ENCODE measurements at regions of chr18 and their contacts with region 1.

Region 1: DNA sequence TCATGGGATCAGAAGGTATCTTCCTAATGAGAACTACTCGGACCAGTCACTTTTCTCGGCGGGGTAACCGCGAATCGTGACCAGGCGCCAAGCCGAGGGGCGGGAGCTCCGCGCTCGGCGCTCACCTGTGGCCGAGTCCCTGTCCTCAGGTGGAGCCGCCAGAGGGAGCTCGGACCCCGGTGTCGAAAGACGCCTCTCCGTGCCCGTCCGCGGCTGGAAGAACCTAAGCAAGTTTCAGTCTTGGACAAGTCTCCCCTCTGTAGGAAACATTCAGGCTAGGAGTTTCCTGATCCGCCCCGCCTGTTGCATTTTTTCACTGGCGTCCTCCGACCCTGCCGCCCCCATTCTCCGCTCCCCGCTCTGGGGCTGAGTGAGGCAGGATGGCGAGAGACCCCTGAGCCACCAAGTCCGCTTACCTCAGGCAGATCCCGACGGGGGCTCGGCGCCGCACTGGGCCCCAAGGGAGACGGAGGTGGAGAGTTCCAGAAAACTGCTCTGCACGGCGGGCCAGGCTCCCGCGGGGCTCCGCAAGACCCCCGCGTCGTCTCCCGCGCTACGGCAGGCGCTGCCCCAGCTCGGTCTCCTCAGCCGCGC is 478 bp downstream of the DSEL start:
- DNase-seq: peak; percentile 77
- H3K4me3 Mint-ChIP-seq: peak overlapping the region; percentile 88
- H3K27ac Mint-ChIP-seq: no peak overlapping the region
- H3K4me1 Mint-ChIP-seq: peaks cover 18% of the 10 kb centered on the region
- H3K27me3 Mint-ChIP-seq: peaks cover 4% of the 10 kb centered on the region

Region 2: GRCh38 chr18:66971960-66972359 is 544.1 kb before region 1 on chr18:
- CTCF ChIA-PET with region 1: no interaction called
- POLR2A ChIA-PET with region 1: no interaction called
- intact Hi-C with region 1: no loop called
- DNase-seq: no peak
- H3K4me3 Mint-ChIP-seq: no peak overlapping the region
- H3K27ac Mint-ChIP-seq: no peak overlapping the region
- H3K4me1 Mint-ChIP-seq: no peaks in the 10 kb centered on the region
- H3K27me3 Mint-ChIP-seq: no peaks in the 10 kb centered on the region

Region 3: GRCh38 chr18:67217551-67218166 is 298.4 kb before region 1 on chr18:
- CTCF ChIA-PET with region 1: interaction called, 7 read pairs
- POLR2A ChIA-PET with region 1: no interaction called
- intact Hi-C with region 1: loop called (anchors 1 kb)
- DNase-seq: peak; percentile 58
- H3K4me3 Mint-ChIP-seq: no peak overlapping the region
- H3K27ac Mint-ChIP-seq: no peak overlapping the region
- H3K4me1 Mint-ChIP-seq: no peaks in the 10 kb centered on the region
- H3K27me3 Mint-ChIP-seq: no peaks in the 10 kb centered on the region

Region 4: DNA sequence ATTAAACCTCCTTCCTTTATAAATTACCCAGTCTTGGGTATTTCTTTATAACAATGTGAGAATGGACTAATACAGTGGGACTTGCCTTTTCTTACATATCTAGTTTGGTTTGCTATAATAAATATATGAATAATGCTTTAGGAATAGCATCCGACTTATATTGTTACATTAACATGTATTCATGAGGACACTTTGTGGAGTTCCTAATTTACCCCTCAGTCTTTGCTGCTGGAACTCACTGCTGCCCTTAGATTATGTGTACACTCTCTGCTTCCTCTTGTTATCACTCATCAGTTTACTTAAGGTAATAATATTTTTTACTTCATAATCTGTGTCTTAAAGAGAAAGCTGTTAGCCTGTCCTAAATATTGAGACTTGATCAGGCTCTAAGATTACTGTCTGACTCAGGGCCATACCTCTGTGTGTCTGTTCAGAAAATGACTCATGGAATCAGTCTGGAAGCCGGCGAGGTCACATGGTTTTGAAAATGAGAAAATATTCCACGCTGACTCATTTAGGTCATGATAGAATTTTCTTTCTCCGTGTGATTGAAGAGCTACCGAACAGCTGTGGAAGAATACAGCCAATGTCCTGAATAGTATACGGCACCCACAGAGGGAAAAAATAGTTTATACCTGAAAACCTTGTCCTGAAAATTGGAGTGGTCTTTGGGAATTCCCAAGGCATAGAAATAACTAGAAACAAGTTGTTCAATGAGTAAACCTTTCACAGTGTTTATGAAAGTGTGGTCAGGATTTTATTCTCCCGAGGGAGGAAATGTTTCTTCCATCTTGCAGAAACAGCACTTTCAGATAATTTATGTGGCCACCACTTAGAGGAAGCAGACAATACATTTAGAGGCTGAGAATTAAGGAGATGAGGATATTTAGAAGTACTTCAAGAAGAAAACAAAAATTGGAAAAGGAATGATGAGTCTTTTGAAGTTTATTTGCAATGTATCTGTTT is 155.9 kb before region 1 on chr18:
- CTCF ChIA-PET with region 1: no interaction called
- POLR2A ChIA-PET with region 1: no interaction called
- intact Hi-C with region 1: loop called (anchors 2 kb)
- DNase-seq: peak; percentile 63
- H3K4me3 Mint-ChIP-seq: no peak overlapping the region
- H3K27ac Mint-ChIP-seq: no peak overlapping the region
- H3K4me1 Mint-ChIP-seq: peaks cover 16% of the 10 kb centered on the region
- H3K27me3 Mint-ChIP-seq: peaks cover 1% of the 10 kb centered on the region

Region 5: DNA sequence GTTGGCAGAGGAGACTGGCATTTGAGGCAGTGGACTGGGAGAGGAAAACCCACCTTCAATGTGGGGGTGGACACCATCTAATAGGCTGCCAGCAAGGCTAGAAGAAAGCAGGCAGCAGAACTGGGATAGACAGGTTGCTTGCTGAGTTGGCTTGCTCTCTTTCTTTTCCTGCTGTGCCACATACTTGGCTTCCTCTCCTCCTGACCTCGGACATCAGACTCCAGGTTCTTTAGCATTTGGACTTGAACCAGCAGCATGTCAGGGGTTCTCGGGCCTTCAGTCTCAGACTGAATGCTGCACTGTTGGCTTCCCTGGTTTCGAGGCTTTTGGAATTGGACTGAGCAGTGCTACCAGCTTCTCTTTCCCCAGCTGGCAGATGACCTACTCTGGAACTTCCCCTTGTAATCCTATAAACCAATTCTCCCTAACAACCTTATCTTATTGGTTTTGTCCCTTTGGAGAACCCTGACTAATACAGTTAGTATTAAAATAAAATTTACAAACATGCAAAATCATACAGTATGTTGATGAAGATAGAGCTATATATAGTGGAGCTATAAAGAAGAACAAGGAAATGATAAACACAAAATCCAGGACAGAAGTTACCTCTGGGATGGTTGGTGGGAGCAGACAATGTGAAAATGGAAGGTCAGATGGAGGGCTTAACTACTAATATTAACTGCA is 15.4 kb before region 1 on chr18:
- CTCF ChIA-PET with region 1: no interaction called
- POLR2A ChIA-PET with region 1: no interaction called
- intact Hi-C with region 1: no loop called
- DNase-seq: no peak
- H3K4me3 Mint-ChIP-seq: no peak overlapping the region
- H3K27ac Mint-ChIP-seq: no peak overlapping the region
- H3K4me1 Mint-ChIP-seq: no peaks in the 10 kb centered on the region
- H3K27me3 Mint-ChIP-seq: peaks cover 3% of the 10 kb centered on the region

Region 6: DNA sequence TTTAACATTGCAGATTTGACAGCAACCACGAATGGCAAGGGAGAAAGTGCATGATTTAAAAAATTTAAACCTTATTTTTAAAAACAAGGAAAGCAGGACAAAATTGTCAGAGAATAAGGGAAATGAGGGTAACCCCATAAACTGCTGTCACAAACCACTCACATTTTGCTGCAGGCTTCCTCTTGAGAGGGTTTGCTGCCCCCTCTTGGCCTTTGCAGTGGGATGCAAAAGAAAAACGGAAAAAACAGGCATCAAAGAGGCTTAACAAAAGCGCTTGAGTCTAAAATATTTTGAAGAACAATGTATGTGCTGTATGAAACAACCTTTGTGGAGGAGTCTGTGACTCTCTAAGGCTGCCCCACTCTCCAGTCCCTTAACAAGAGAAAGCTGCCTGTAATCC is 1107.3 kb after region 1 on chr18:
- CTCF ChIA-PET with region 1: no interaction called
- POLR2A ChIA-PET with region 1: no interaction called
- intact Hi-C with region 1: loop called (anchors 5 kb)
- DNase-seq: peak; percentile 37
- H3K4me3 Mint-ChIP-seq: no peak overlapping the region
- H3K27ac Mint-ChIP-seq: no peak overlapping the region
- H3K4me1 Mint-ChIP-seq: no peaks in the 10 kb centered on the region
- H3K27me3 Mint-ChIP-seq: peaks cover 2% of the 10 kb centered on the region

Region 7: DNA sequence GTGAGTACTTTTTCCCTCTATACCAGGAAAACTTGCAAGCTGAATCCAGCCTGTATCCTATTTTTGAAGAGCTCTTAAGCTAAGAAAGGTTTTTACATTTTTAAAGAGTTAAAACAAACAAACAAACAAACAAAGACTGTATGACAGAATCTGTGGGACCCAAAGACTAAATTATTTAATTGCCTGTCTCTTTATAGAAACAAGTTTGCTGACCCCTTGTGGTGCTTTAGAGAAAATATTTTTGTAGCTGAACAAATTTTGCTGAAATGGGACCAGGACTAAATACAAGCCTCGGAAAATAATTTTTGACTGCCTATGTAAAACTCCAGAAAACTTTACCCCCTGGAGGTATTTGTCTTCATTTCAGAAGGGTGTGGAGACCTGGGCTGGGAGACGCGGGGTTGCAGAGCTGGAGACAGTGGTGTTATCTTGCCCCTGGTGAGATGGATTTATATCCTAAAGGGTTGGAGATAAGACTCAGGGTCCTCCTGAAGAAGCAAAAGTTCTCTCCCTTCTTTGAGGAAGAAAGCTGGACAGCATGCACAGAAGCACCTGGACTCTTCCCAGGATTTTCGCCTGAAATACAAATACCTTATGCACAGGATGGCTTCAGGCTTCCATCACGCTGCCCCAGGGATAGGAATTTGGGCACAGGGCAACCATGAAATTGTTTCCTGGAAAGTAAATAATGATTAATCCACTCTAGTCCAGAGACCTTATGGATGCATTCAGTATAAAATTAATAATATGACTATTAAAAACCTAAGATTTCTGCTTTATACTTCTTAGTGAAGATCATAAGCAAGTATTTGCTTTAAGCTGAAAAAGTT is 1144.5 kb after region 1 on chr18:
- CTCF ChIA-PET with region 1: interaction called, 11 read pairs
- POLR2A ChIA-PET with region 1: no interaction called
- intact Hi-C with region 1: loop called (anchors 5 kb)
- DNase-seq: no peak
- H3K4me3 Mint-ChIP-seq: no peak overlapping the region
- H3K27ac Mint-ChIP-seq: no peak overlapping the region
- H3K4me1 Mint-ChIP-seq: no peaks in the 10 kb centered on the region
- H3K27me3 Mint-ChIP-seq: peaks cover 2% of the 10 kb centered on the region

Region 8: DNA sequence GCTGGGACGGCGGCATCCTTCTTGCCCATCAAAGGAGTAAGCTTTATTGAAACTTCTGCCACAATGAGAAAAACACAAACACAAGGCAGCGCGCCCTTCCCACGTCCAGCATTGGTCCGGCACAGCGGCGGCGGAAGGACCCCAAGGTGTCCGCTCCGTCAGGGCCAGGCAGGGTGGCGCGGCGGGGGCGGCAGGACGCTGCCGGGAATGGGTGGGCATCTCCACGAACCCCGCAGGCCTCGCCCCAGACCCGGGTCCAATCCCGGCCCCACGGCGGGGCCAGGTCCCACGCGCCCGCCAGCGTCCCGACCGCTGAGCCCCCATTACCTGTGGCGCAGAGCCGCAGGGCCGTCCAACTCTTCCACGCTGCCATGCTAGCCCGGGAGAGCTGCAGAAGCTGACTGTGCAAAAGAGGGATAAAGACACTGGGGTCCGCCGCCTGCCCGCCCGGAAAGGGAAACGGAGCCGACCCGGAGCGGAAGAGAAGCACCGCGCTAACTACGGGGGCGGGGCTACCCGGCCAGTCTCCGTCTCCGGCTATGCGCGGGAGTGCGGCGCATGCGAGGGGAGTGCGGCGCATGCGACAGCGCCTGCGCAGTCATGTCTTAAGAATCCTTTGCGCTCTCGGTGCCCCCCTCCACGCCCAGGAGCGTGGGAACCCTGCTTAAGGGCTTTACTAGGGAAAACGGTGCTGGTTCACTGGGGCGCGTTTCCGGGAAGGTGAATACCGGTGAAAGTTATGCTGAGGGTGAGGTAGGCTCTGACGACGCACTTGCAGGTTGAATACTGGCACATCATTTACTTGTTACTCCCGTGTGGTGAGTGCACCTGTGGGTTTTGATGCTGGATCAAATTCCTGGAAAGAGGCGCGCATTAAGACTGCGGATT is 1198.8 kb after region 1 on chr18 and contains the start of gene TMX3:
- CTCF ChIA-PET with region 1: no interaction called
- POLR2A ChIA-PET with region 1: no interaction called
- intact Hi-C with region 1: loop called (anchors 1 kb)
- DNase-seq: peak; percentile 94
- H3K4me3 Mint-ChIP-seq: peak within 1 kb of the TSS; percentile 97
- H3K27ac Mint-ChIP-seq: peak within 1 kb of the TSS; percentile 93
- H3K4me1 Mint-ChIP-seq: peaks cover 42% of the 10 kb centered on the region
- H3K27me3 Mint-ChIP-seq: no peaks in the 10 kb centered on the region
- total RNA-seq, gene TMX3: 42.4 to 44.6 TPM

Region 9: GRCh38 chr18:68735483-68736343 is 1219.7 kb after region 1 on chr18:
- CTCF ChIA-PET with region 1: no interaction called
- POLR2A ChIA-PET with region 1: no interaction called
- intact Hi-C with region 1: loop called (anchors 5 kb)
- DNase-seq: no peak
- H3K4me3 Mint-ChIP-seq: no peak overlapping the region
- H3K27ac Mint-ChIP-seq: no peak overlapping the region
- H3K4me1 Mint-ChIP-seq: no peaks in the 10 kb centered on the region
- H3K27me3 Mint-ChIP-seq: no peaks in the 10 kb centered on the region